T-cell (primary cell): ENCODE measurements at regions of chrX and their contacts with region 1.

Region 1: DNA sequence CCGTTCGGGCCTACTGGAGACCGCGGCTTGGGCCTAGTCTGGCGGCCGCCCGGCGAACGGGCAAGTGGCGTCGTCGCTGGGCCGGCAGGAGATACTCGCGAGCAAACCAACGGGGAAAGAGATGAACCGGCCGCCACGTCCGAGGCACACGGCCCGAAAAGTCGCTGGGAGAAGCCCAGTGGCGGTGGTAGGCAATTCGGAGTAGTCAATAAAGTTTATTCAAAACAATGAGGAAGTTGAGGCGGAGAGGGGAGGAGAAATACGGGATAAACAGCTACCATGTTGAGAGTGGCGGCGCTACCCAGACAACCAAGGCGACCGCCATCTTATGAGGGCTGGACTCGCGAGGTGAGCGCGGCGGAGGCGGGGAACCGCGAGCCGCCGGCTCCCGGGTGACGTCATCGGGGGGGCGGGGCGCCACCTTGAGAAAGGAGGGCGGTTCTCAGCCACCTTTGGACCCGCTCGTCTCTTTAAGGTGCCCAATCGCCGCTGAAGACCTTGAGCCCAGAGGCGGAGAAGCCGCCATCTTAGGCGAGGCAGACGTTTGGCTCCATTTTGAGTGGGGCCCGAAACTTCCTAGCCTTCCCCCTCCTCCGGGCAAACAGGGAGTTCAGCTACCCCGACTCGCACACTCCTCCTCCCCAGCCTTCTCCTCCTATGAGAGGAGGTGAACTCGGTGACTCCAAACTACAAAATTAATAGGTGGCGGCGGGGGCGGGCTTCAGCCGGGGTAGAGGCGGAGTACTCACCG is at the start of gene PHF8:
- DNase-seq: peak; percentile 82 to 97 (median 93)
- ATAC-seq: peak; percentile 84 to 86 (median 85)
- H3K4me3 ChIP-seq: peak within 1 kb of the TSS; percentile 59 to 75
- H3K4me3 Mint-ChIP-seq: peak within 1 kb of the TSS; percentile 91 to 96 (median 94)
- H3K27ac ChIP-seq: peak within 1 kb of the TSS; percentile 93
- H3K27ac Mint-ChIP-seq: peak within 1 kb of the TSS; percentile 98
- H3K4me1 ChIP-seq: peaks cover 10 to 13% of the 10 kb centered on the region in 2 experiments
- H3K4me1 Mint-ChIP-seq: peaks cover 17 to 27% (median 23%) of the 10 kb centered on the region in 3 donors
- H3K27me3 ChIP-seq: no peaks in the 10 kb centered on the region
- H3K27me3 Mint-ChIP-seq: peaks cover 0 to 10% of the 10 kb centered on the region in 2 donors
- total RNA-seq, gene PHF8: 52.3 to 68.1 (median 63.7) TPM

Region 2: GRCh38 chrX:54639346-54640102 is 595.2 kb after region 1 on chrX:
- CTCF ChIA-PET with region 1: interaction called in 1 of 2 experiments, 10 read pairs
- POLR2A ChIA-PET with region 1: no interaction called
- DNase-seq: peak; percentile 80 to 97 (median 92)
- ATAC-seq: peak; percentile 89 to 91 (median 90)
- H3K4me3 ChIP-seq: peak overlapping the region; percentile 45 to 81
- H3K4me3 Mint-ChIP-seq: peak overlapping the region; percentile 75 to 95 (median 91)
- H3K27ac ChIP-seq: peak overlapping the region; percentile 99
- H3K27ac Mint-ChIP-seq: peak overlapping the region; percentile 98 to 99
- H3K4me1 ChIP-seq: peaks cover 0 to 12% of the 10 kb centered on the region in 2 experiments
- H3K4me1 Mint-ChIP-seq: peaks cover 4 to 13% (median 8%) of the 10 kb centered on the region in 3 donors
- H3K27me3 ChIP-seq: no peaks in the 10 kb centered on the region
- H3K27me3 Mint-ChIP-seq: no peaks in the 10 kb centered on the region